ENCODE measurements at regions of chr6 and their contacts with region 1.

Region 1: GRCh38 chr6:90478789-90479602 is 107.9 kb downstream of the MAP3K7 start:
- DNase-seq: peak; percentile 96
- H3K4me3 ChIP-seq: no peak overlapping the region
- H3K27ac ChIP-seq: peak overlapping the region in 1 of 4 donors; percentile 10
- H3K4me1 ChIP-seq: peaks cover 5 to 10% (median 8%) of the 10 kb centered on the region in 4 donors
- H3K27me3 ChIP-seq: no peaks in the 10 kb centered on the region
- CTCF ChIP-seq: peak; percentile 88 to 93 (median 93)
- EP300 ChIP-seq: no peak
- POLR2A ChIP-seq: no peak

Region 2: GRCh38 chr6:89940225-89941027 is 538.6 kb before region 1 on chr6:
- intact Hi-C with region 1: loop called (anchors 1 kb)
- DNase-seq: no peak
- H3K4me3 ChIP-seq: no peak overlapping the region
- H3K27ac ChIP-seq: peak overlapping the region in 2 of 4 donors; percentile 6 to 18
- H3K4me1 ChIP-seq: peaks cover 5 to 24% (median 17%) of the 10 kb centered on the region in 4 donors
- H3K27me3 ChIP-seq: no peaks in the 10 kb centered on the region
- CTCF ChIP-seq: peak; percentile 65 to 77 (median 75)
- EP300 ChIP-seq: no peak
- POLR2A ChIP-seq: no peak

Region 3: DNA sequence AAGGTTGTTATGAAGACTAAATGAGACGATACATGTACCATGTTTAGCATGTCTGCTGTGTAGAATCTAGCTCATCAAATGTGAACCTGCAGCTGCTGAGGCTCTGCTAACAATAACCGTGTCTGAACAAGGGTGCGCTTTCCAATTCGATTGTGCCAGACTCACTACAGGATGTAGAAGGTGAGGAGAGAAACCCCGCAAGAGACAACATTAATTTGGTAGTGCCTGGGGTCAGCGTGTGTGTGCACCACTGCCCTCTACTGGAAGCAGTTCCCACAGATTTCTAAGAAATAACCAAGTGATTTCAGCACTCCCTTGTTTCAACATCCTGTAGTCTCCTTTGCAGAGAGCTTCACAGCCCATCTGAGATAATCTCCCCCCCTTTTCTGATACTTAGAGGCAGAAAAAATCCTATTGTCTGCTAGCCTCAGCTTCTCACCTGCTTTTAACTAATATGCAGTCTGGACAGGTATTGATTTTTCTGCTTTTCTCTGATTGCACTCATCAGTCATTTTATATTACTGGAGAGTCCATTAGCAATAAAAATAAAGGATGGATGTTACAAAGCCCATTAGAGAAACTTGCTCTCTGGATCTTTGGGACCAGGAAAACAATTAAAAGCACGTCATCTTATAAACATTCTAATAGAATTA is 85.6 kb before region 1 on chr6:
- intact Hi-C with region 1: loop called (anchors 5 kb)
- DNase-seq: no peak
- H3K4me3 ChIP-seq: no peak overlapping the region
- H3K27ac ChIP-seq: no peak overlapping the region
- H3K4me1 ChIP-seq: peaks cover 0 to 6% (median 2%) of the 10 kb centered on the region in 4 donors
- H3K27me3 ChIP-seq: no peaks in the 10 kb centered on the region
- CTCF ChIP-seq: peak; percentile 75 to 84 (median 80)
- EP300 ChIP-seq: no peak
- POLR2A ChIP-seq: no peak

Measured in esophagus muscularis mucosa (tissue), 4 donors.